Naive thymus-derived CD4-positive, alpha-beta T cell (primary cell): ENCODE measurements at regions of chr12 and their contacts with region 1.

Region 1: GRCh38 chr12:21697904-21698630 is 40.4 kb upstream of the LDHB start:
- DNase-seq: peak in 5 of 9 donors; percentile 23 to 48 (median 45)
- ATAC-seq: peak; percentile 54
- H3K4me3 ChIP-seq: no peak overlapping the region
- H3K4me3 Mint-ChIP-seq: peak overlapping the region in 6 of 10 donors; percentile 21 to 83 (median 52)
- H3K27ac ChIP-seq: no peak overlapping the region
- H3K27ac Mint-ChIP-seq: no peak overlapping the region
- H3K4me1 ChIP-seq: peaks cover 0 to 5% of the 10 kb centered on the region in 2 donors
- H3K4me1 Mint-ChIP-seq: peaks cover 0 to 22% (median 11%) of the 10 kb centered on the region in 7 donors
- H3K27me3 ChIP-seq: no peaks in the 10 kb centered on the region
- H3K27me3 Mint-ChIP-seq: peaks cover 0 to 15% (median 0%) of the 10 kb centered on the region in 5 donors

Region 2: DNA sequence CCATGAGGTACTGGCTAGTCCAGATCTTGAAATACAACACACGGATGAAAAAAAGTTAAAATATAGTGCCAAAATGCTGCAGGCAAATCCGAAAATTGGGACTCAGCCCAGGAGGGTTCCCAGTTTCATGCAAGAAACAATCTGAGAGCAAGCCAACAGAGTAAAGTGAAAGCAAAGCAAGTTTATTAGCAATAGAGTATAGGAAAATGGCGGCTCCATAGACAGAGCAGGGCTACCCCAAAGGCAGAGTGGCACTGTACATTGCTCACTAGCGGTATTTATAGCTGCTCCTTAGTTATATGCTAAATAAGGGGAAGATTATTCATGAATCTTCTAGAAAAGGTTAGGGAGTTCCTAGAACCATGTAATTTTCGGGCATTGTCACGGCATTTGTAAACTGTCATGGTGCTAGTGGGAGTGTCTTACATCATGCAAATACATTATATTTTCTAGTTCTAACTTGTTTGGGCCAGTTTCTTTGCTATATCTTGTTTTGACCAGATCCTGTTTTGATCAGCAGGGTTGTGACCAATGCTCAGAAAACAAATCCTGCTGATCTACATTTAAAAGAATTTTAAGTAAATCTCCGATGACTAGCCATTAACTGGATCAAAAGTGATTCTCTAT is 225.8 kb before region 1 on chr12:
- CTCF ChIA-PET with region 1: no interaction called
- POLR2A ChIA-PET with region 1: no interaction called
- intact Hi-C with region 1: no loop called
- DNase-seq: no peak
- ATAC-seq: no peak
- H3K4me3 ChIP-seq: no peak overlapping the region
- H3K4me3 Mint-ChIP-seq: no peak overlapping the region
- H3K27ac ChIP-seq: no peak overlapping the region
- H3K27ac Mint-ChIP-seq: peak overlapping the region in 5 of 9 donors; percentile 3 to 48 (median 38)
- H3K4me1 ChIP-seq: no peaks in the 10 kb centered on the region
- H3K4me1 Mint-ChIP-seq: peaks cover 0 to 16% (median 0%) of the 10 kb centered on the region in 7 donors
- H3K27me3 ChIP-seq: no peaks in the 10 kb centered on the region
- H3K27me3 Mint-ChIP-seq: no peaks in the 10 kb centered on the region

Region 3: GRCh38 chr12:21989819-21990412 is 291.8 kb after region 1 on chr12:
- CTCF ChIA-PET with region 1: interaction called, 5 read pairs
- POLR2A ChIA-PET with region 1: no interaction called
- intact Hi-C with region 1: loop called in 1 of 2 experiments (anchors 1 kb)
- DNase-seq: peak in 1 of 9 donors; percentile 4
- ATAC-seq: no peak
- H3K4me3 ChIP-seq: no peak overlapping the region
- H3K4me3 Mint-ChIP-seq: no peak overlapping the region
- H3K27ac ChIP-seq: no peak overlapping the region
- H3K27ac Mint-ChIP-seq: no peak overlapping the region
- H3K4me1 ChIP-seq: no peaks in the 10 kb centered on the region
- H3K4me1 Mint-ChIP-seq: peaks cover 8 to 9% (median 9%) of the 10 kb centered on the region in 7 donors
- H3K27me3 ChIP-seq: peaks cover 0 to 3% of the 10 kb centered on the region in 2 donors
- H3K27me3 Mint-ChIP-seq: peaks cover 4 to 19% (median 16%) of the 10 kb centered on the region in 5 donors

Region 4: GRCh38 chr12:22018860-22019259 is 320.8 kb after region 1 on chr12:
- CTCF ChIA-PET with region 1: interaction called, 34 read pairs
- POLR2A ChIA-PET with region 1: no interaction called
- intact Hi-C with region 1: loop called (anchors 1 kb)
- DNase-seq: peak in 5 of 9 donors; percentile 6 to 25 (median 13)
- ATAC-seq: no peak
- H3K4me3 ChIP-seq: no peak overlapping the region
- H3K4me3 Mint-ChIP-seq: no peak overlapping the region
- H3K27ac ChIP-seq: no peak overlapping the region
- H3K27ac Mint-ChIP-seq: no peak overlapping the region
- H3K4me1 ChIP-seq: no peaks in the 10 kb centered on the region
- H3K4me1 Mint-ChIP-seq: no peaks in the 10 kb centered on the region
- H3K27me3 ChIP-seq: no peaks in the 10 kb centered on the region
- H3K27me3 Mint-ChIP-seq: peaks cover 0 to 17% (median 3%) of the 10 kb centered on the region in 5 donors

Region 5: GRCh38 chr12:22083167-22083566 is 385.1 kb after region 1 on chr12:
- CTCF ChIA-PET with region 1: interaction called, 3 read pairs
- POLR2A ChIA-PET with region 1: no interaction called
- intact Hi-C with region 1: loop called in 1 of 2 experiments (anchors 10 kb)
- DNase-seq: peak in 7 of 9 donors; percentile 18 to 57 (median 47)
- ATAC-seq: peak; percentile 56
- H3K4me3 ChIP-seq: no peak overlapping the region
- H3K4me3 Mint-ChIP-seq: no peak overlapping the region
- H3K27ac ChIP-seq: no peak overlapping the region
- H3K27ac Mint-ChIP-seq: no peak overlapping the region
- H3K4me1 ChIP-seq: no peaks in the 10 kb centered on the region
- H3K4me1 Mint-ChIP-seq: no peaks in the 10 kb centered on the region
- H3K27me3 ChIP-seq: no peaks in the 10 kb centered on the region
- H3K27me3 Mint-ChIP-seq: peaks cover 0 to 9% (median 0%) of the 10 kb centered on the region in 5 donors

Region 6: GRCh38 chr12:22173177-22173576 is 475.1 kb after region 1 on chr12:
- CTCF ChIA-PET with region 1: no interaction called
- POLR2A ChIA-PET with region 1: no interaction called
- intact Hi-C with region 1: loop called in 1 of 2 experiments (anchors 5 kb)
- DNase-seq: peak in 2 of 9 donors; percentile 6 to 12
- ATAC-seq: no peak
- H3K4me3 ChIP-seq: no peak overlapping the region
- H3K4me3 Mint-ChIP-seq: no peak overlapping the region
- H3K27ac ChIP-seq: no peak overlapping the region
- H3K27ac Mint-ChIP-seq: no peak overlapping the region
- H3K4me1 ChIP-seq: no peaks in the 10 kb centered on the region
- H3K4me1 Mint-ChIP-seq: peaks cover 2 to 8% (median 6%) of the 10 kb centered on the region in 7 donors
- H3K27me3 ChIP-seq: no peaks in the 10 kb centered on the region
- H3K27me3 Mint-ChIP-seq: peaks cover 0 to 2% (median 0%) of the 10 kb centered on the region in 5 donors